GM12878 (cell line): ENCODE measurements at regions of chr3 and their contacts with region 1.

Region 1: DNA sequence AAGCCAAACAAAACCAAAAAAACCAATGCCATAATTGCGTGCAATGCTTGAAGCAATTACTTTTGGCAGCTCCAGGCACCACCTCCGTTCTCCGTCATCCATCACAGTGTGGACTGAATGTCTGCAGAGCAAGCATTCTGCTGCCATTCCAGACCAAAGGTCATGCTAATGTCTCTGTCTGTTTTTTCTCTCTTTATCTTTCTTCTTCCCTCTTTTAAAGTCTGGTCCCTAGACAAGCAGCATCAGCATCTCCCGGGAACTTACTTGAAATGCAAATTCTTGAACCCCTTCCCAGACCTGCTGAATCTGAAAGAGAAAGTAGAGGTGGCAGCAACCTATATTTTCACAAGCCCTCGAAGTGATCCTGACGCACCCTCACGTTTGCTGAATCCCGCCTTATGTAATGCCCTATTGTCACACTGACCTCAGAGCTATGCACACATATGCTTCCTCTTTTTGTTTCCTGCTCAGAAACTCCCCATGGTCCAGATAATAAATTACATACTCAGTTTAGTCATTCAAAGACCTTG is 297.3 kb upstream of the PROK2 start:
- DNase-seq: peak; percentile 80
- ATAC-seq: peak; percentile 79
- H3K4me3 ChIP-seq: peak overlapping the region; percentile 33; the same call in 1 of the 2 replicates
- H3K27ac ChIP-seq: peak overlapping the region; percentile 78
- H3K4me1 ChIP-seq: peaks cover 71% of the 10 kb centered on the region
- H3K27me3 ChIP-seq: no peaks in the 10 kb centered on the region
- CTCF ChIP-seq: no peak
- EP300 ChIP-seq: peak; percentile 46 to 69; a peak in 2 of 4 replicates
- POLR2A ChIP-seq: no peak
- RAD21 ChIP-seq: no peak

Region 2: DNA sequence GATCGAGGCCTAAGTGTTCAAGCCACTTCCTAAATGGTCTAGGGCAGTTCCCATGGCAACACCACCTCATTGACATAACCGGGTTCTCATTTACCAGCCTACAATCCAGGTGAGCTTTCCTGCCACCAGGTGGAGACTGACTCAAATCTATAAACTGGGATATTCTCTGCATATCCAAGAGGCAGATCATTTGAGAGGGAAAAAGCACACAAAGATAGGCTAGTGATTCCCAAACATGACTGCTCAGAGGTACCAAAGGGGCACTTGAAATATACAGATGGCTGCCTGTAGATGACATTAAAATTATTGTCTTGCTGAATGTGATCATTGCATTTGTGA is 156.0 kb before region 1 on chr3:
- CTCF ChIA-PET with region 1: interaction called, 3 read pairs
- POLR2A ChIA-PET with region 1: no interaction called
- RAD21 ChIA-PET with region 1: interaction called, 5 read pairs
- SMC1A ChIA-PET with region 1: interaction called, 4 read pairs
- in situ Hi-C with region 1: no loop called
- intact Hi-C with region 1: loop called (anchors 2 kb)
- DNase-seq: no peak
- ATAC-seq: peak; percentile 71
- H3K4me3 ChIP-seq: no peak overlapping the region
- H3K27ac ChIP-seq: no peak overlapping the region
- H3K4me1 ChIP-seq: peaks cover 4% of the 10 kb centered on the region; the same call in 1 of the 2 replicates
- H3K27me3 ChIP-seq: no peaks in the 10 kb centered on the region
- CTCF ChIP-seq: peak; percentile 36 to 53 (median 51); a peak in 5 of 6 replicates
- EP300 ChIP-seq: no peak
- POLR2A ChIP-seq: no peak
- RAD21 ChIP-seq: peak; percentile 72

Region 3: DNA sequence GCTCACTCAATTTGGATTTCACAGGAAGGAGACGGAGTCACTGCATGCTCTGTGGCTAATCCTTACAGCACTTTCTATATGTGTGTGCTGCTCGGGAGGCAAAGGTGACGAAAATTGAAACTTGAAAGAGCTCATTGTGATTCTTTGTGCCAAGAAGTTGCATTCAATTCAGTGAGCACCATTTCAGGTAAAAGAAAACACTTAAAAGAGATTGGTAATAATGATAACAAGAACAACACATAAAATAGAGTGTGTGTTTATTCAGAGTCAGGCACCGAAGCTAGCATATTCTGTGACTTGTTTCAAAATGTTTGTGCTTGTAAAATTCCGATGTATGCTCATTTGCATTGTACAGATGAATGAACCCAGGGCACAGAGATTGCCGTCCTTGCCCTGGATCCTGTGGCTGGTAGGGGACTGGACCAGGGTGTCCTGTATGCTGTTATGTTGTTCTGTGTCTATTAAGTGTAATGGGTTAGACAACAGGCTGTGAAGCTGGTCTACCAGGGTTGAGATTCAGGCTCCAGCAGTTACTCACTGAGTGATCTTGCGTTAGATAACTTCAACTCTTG is 104.0 kb before region 1 on chr3:
- CTCF ChIA-PET with region 1: interaction called, 26 read pairs
- POLR2A ChIA-PET with region 1: interaction called, 10 read pairs
- RAD21 ChIA-PET with region 1: interaction called, 87 read pairs
- SMC1A ChIA-PET with region 1: interaction called, 92 read pairs
- in situ Hi-C with region 1: no loop called
- intact Hi-C with region 1: no loop called
- DNase-seq: peak; percentile 81
- ATAC-seq: peak; percentile 90
- H3K4me3 ChIP-seq: peak overlapping the region; percentile 40; the same call in 1 of the 2 replicates
- H3K27ac ChIP-seq: peak overlapping the region; percentile 78
- H3K4me1 ChIP-seq: peaks cover 39% of the 10 kb centered on the region
- H3K27me3 ChIP-seq: no peaks in the 10 kb centered on the region
- CTCF ChIP-seq: no peak
- EP300 ChIP-seq: peak; percentile 52 to 59; a peak in 2 of 4 replicates
- POLR2A ChIP-seq: no peak
- RAD21 ChIP-seq: 0 out of 2 replicates have a peak, but pooled peaks have one; percentile 12

Region 4: GRCh38 chr3:72092778-72093177 is 10.5 kb after region 1 on chr3:
- CTCF ChIA-PET with region 1: interaction called, 8 read pairs
- POLR2A ChIA-PET with region 1: interaction called, 8 read pairs
- RAD21 ChIA-PET with region 1: interaction called, 13 read pairs
- SMC1A ChIA-PET with region 1: interaction called, 43 read pairs
- in situ Hi-C with region 1: no loop called
- intact Hi-C with region 1: no loop called
- DNase-seq: no peak
- ATAC-seq: peak; percentile 56
- H3K4me3 ChIP-seq: no peak overlapping the region
- H3K27ac ChIP-seq: no peak overlapping the region; the same call in 1 of the 2 replicates
- H3K4me1 ChIP-seq: peaks cover 22% of the 10 kb centered on the region
- H3K27me3 ChIP-seq: no peaks in the 10 kb centered on the region
- CTCF ChIP-seq: peak; percentile 9 to 24 (median 12); a peak in 2 of 6 replicates
- EP300 ChIP-seq: no peak
- POLR2A ChIP-seq: no peak
- RAD21 ChIP-seq: 0 out of 2 replicates have a peak, but pooled peaks have one; percentile 5

Region 5: DNA sequence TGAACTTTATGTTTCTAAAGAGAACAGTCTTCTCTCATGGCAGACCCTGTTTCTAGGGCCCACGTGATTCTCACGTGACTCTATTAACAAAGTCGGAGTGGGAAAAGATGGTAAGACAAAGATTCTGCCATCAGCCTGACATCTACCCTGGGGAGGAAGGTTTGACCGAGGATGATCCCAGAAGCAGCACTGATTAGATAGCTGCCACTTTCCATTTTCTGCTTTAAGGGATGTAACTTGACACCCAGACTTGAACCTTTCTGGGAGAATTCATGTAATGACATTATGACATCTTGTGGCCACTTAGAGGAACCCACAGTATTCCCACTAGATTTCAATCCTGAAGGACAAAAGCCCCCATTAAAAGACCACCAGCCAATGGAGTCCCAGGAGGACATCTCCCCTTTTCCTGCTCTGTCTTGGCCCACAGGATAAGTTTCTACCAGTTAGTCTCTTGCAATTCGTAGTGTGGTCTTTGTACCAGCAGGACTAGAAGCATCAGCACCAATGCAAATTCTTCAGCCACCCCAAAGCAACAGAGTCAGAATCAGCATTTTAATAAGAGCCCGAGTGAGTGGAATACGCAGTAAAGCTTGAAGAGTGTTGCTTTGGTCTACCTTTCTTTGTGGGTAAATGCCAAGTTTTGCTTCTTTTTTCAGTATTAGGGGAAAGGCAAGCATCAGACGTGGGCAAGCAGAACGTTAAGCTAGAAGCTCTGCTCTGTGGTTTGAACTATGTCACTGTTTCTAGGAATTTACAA is 183.2 kb after region 1 on chr3:
- CTCF ChIA-PET with region 1: no interaction called
- POLR2A ChIA-PET with region 1: no interaction called
- RAD21 ChIA-PET with region 1: no interaction called
- SMC1A ChIA-PET with region 1: interaction called, 3 read pairs
- in situ Hi-C with region 1: no loop called
- intact Hi-C with region 1: loop called (anchors 5 kb)
- DNase-seq: no peak
- ATAC-seq: peak; percentile 57
- H3K4me3 ChIP-seq: no peak overlapping the region
- H3K27ac ChIP-seq: no peak overlapping the region
- H3K4me1 ChIP-seq: peaks cover 43% of the 10 kb centered on the region
- H3K27me3 ChIP-seq: no peaks in the 10 kb centered on the region
- CTCF ChIP-seq: peak; percentile 3 to 35 (median 23); a peak in 2 of 6 replicates
- EP300 ChIP-seq: no peak
- POLR2A ChIP-seq: no peak
- RAD21 ChIP-seq: peak; percentile 62